ENCODE measurements at regions of chr11 and their contacts with region 1.

Region 1: DNA sequence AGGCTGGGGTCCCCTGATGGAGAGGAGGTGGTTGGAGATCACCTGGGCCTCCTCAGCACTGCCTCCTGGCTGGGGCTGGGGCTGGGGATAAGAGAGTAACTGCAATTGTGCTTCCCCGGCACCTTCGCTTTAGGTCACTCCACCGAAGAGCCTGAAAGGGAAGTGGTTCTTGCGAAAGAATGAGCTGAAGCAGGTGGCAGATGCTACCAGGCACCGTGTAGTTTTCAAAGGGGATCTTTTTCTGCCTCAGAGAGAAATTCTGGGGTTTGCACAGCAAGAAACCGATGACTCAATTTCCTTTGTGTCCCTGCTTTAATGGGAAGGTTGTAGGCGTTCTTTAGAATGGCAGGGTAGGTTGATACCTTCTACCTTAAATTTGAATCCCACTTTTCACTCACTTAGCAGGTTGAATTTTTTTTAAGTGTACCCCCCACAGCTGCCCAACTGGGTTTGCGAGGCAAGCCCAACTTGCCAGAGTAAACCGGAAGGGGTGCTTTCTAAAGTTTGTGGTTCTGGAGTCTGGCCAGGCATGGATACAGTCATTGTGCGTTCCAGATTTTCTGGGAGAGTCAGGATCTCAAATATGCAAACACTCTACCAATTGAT is 5.3 kb downstream of the CD44 start:
- DNase-seq: peak; percentile 87
- H3K4me3 Mint-ChIP-seq: peak overlapping the region; percentile 55
- H3K27ac Mint-ChIP-seq: peak overlapping the region; percentile 96
- H3K4me1 Mint-ChIP-seq: peaks cover 68% of the 10 kb centered on the region
- H3K27me3 Mint-ChIP-seq: no peaks in the 10 kb centered on the region

Region 2: GRCh38 chr11:34234086-34234740 is 910.0 kb before region 1 on chr11:
- CTCF ChIA-PET with region 1: no interaction called
- intact Hi-C with region 1: loop called (anchors 10 kb)
- DNase-seq: peak; percentile 93
- H3K4me3 Mint-ChIP-seq: no peak overlapping the region
- H3K27ac Mint-ChIP-seq: peak overlapping the region; percentile 83
- H3K4me1 Mint-ChIP-seq: peaks cover 57% of the 10 kb centered on the region
- H3K27me3 Mint-ChIP-seq: no peaks in the 10 kb centered on the region

Region 3: DNA sequence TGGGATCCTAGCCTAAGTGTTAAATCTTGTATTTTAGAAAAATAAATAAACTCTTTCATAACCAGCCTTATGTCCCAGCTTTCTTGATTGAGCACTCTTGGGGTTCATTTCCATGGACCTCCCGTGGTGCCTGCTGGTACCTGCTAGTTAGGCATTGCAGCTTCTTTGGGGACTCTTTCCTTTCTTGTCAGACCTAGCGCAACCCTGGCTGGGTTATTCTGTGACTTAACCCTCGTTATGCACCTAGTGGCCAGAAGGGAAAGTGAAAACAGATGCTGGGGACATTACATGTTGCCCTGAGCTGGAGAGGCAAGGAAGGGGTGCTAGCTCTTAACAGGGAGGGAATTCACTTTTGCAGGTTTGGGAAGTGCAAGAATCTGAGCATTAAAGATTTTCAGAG is 274.8 kb before region 1 on chr11:
- CTCF ChIA-PET with region 1: no interaction called
- intact Hi-C with region 1: no loop called
- DNase-seq: no peak
- H3K4me3 Mint-ChIP-seq: no peak overlapping the region
- H3K27ac Mint-ChIP-seq: no peak overlapping the region
- H3K4me1 Mint-ChIP-seq: no peaks in the 10 kb centered on the region
- H3K27me3 Mint-ChIP-seq: no peaks in the 10 kb centered on the region

Region 4: DNA sequence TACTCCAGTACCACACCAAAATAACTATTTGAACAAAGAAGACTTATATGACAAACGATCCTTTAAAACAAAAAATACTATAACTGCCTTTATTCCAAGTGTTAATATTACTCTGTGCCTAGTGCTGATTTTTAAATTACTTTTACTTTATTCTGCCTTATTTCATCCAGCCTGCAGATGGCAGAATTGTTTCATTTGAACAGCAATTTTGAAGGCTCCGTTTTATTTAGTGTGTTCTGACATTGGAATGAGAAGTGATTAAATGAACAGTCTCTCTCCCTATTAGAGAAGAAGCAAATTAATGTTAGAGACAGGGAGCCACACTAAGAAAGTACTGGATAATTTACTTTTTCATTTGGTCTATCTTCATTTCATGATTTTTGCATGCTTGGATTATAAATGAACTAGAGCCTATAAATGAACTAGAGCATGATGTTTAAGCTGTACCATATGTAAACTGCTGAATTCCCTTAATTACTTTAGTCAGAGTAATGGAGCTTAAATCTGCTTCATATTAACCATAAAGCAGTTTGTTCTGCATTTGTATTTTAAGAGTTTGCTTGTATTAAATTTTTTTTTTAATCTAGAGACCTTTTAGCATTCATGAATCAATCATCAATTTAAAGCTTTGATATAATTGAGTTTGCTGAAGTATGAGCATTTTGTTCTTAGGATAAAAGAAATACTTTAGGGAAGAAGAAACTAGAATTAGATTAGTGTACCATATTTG is 218.0 kb before region 1 on chr11:
- CTCF ChIA-PET with region 1: interaction called, 4 read pairs
- intact Hi-C with region 1: loop called (anchors 1 kb)
- DNase-seq: peak; percentile 22
- H3K4me3 Mint-ChIP-seq: no peak overlapping the region
- H3K27ac Mint-ChIP-seq: no peak overlapping the region
- H3K4me1 Mint-ChIP-seq: peaks cover 17% of the 10 kb centered on the region
- H3K27me3 Mint-ChIP-seq: no peaks in the 10 kb centered on the region

Region 5: DNA sequence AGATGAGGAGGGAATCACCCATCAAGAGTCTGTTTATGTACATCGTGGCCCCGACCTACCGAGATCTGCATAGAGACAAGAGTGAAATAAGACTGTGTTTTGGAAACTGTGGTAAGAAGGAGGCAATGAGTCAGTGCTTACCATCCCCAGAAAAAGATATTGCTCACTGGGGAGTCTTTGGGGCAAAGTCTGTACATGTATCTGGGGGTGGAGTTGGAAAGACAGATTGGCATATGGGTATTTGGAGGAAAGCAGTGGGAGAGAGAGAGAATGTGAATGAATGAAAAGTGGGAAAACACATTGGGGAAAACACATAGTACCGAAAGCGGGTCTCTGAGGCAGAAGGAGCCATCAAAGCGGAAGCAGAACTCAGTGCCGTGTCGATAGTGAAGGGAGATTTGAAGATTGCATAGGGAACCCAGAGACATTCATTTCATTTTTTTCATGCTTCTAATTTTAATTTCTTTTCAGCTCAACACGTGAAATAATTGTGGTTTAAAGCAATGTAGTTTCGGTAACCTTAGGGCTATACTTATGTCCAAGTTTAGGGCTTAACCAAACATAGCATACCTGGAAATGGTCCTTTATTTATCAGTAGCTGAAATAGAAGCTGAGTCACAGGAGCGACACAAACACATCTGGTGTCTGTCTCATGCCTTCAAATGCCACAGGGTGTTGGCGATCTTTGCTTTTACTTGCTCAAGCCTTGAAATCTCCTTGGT is 103.9 kb before region 1 on chr11:
- CTCF ChIA-PET with region 1: interaction called, 4 read pairs
- intact Hi-C with region 1: loop called (anchors 1 kb)
- DNase-seq: peak; percentile 83
- H3K4me3 Mint-ChIP-seq: peak overlapping the region; percentile 76
- H3K27ac Mint-ChIP-seq: peak overlapping the region; percentile 94
- H3K4me1 Mint-ChIP-seq: peaks cover 60% of the 10 kb centered on the region
- H3K27me3 Mint-ChIP-seq: peaks cover 5% of the 10 kb centered on the region

Region 6: DNA sequence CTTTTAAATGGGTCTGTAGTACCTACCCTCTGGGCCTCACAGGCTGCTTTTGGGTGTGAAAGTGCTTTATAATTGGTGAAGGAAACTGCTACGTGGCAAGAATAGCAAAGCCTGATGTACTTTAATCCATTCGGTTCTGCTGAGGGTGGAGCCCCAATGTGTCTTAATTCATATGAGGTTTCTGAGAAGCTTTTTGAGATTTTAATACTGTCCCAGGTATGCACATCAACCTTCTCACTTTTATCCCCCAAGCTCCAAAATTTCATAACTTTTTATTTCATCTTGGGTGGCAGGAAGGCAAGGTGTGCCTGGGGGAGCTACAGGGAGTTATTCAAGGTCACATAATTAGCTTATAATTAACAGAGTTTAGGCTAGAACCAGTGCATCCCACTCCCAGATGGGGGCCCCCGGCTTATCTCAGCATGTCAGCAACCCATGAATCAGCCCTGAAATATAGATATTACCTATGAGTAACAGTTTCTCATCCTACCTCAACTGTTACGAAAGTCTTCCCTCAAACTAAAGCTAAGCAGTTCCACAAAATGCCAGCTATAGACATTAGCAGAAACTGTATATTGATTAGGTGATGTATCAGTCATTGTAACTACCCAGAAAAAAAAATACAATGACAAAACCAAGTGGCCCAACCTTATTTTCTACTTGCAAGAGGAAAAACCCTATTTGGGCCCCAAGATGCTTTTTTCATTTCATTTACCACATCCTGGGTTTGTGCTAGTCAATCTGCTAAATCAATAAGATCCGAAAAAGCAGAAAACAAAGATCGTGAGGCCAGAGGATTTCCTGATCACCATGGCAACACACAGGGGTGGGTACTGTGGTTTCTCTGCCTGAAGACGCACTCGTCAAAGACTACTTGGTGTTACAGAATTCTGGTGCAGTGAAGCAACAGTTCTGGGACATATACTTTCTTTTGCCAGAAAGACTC is 21.5 kb after region 1 on chr11:
- CTCF ChIA-PET with region 1: interaction called, 26 read pairs
- intact Hi-C with region 1: loop called (anchors 1 kb)
- DNase-seq: peak; percentile 95
- H3K4me3 Mint-ChIP-seq: peak overlapping the region; percentile 65
- H3K27ac Mint-ChIP-seq: peak overlapping the region; percentile 98
- H3K4me1 Mint-ChIP-seq: peaks cover 99% of the 10 kb centered on the region
- H3K27me3 Mint-ChIP-seq: no peaks in the 10 kb centered on the region

Region 7: DNA sequence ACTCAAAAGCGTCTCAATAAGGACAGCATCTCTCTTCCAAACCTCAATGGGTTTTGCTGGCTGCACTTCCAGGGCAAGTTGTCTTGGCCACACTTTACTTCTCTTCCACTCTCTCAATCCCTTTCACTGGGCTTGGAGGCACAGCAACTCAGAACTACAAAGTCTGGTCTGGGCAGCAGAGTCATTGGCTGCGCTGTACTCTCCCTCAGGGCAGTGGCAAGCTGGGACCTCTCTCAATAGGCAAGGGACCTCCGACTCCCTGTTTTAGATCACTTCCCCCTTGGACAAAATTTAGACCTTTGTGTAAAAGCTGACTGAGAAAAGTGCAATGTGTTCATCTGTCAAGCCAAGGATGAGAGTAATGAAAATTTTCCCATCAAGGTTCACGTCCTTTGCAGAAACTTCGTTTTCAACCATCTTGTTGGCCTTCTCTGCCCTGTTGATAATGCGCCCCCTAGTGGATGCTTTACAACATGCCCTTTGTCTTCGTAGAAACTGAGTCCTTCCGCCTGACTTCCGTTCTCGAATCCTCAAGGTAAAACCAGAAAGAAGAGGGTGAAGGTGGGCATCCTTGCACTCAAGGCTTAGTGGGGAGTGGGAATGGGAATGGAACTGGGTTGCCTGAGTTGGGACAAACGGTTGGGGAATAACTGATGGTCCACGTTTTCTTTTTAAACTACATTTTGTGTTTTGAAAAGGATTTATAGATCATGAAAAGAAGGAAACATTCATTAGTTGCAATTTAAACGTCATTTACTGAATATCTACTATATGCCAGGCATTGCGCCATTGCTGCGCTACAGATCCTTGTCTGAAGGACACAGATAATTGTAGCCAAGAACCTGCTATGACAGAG is 93.8 kb after region 1 on chr11:
- CTCF ChIA-PET with region 1: interaction called, 4 read pairs
- intact Hi-C with region 1: loop called (anchors 1 kb)
- DNase-seq: peak; percentile 79
- H3K4me3 Mint-ChIP-seq: no peak overlapping the region
- H3K27ac Mint-ChIP-seq: peak overlapping the region; percentile 34
- H3K4me1 Mint-ChIP-seq: peaks cover 69% of the 10 kb centered on the region
- H3K27me3 Mint-ChIP-seq: no peaks in the 10 kb centered on the region

Region 8: DNA sequence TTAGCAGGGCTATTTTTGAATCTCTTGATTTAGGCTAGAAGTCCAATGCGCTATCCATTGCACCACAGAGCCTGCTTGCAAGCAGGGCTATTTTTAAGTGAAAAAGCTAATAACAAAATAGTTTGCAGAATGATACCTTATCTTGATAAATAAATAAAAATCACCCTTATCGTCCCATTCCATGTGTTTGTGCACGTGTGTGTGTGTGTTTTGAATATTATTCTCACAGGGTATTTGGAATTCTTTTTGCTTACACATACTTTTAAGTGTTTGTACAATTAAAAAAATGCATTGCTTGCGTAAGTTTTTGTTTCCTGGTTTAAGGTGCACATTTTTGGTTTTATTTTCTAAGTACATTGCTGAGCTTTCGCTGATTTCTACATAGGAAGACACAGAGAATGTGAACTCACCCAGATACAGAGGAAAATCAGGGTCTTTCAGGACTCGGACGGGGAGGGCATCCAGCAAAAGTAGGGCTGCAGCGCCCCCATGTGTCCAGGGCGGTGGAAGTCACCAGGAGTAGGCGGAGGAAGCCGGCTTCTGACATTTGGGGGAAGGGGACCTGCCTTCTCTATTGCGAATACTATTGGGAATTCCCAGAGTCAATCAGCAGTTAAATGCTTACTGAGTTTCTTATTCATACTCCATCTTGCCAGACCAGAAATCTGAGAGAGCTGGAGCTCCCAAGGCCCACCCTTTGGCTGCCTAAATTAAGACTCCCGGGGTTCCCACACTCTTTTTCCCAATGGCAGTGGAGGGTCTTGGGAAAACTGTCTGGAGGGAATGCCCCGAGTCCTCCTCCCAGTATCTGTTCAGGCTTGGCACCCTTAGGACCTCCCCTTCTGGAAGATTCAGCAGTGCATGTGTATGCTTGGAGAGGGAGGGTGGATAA is 247.9 kb after region 1 on chr11:
- CTCF ChIA-PET with region 1: interaction called, 5 read pairs
- intact Hi-C with region 1: loop called (anchors 1 kb)
- DNase-seq: peak; percentile 93
- H3K4me3 Mint-ChIP-seq: peak overlapping the region; percentile 17
- H3K27ac Mint-ChIP-seq: no peak overlapping the region
- H3K4me1 Mint-ChIP-seq: peaks cover 39% of the 10 kb centered on the region
- H3K27me3 Mint-ChIP-seq: no peaks in the 10 kb centered on the region